ENCODE measurements at regions of chr1 and their contacts with region 1.

Region 1: GRCh38 chr1:109041621-109042468 is at the start of gene WDR47:
- DNase-seq: peak; percentile 94 to 95
- ATAC-seq: peak; percentile 97 to 99 (median 98)
- H3K4me3 ChIP-seq: peak within 1 kb of the TSS; percentile 89 to 100 (median 96)
- H3K27ac ChIP-seq: peak within 1 kb of the TSS; percentile 54 to 93 (median 89)
- H3K4me1 ChIP-seq: peaks cover 0 to 20% (median 13%) of the 10 kb centered on the region in 9 donors
- H3K27me3 ChIP-seq: no peaks in the 10 kb centered on the region
- CTCF ChIP-seq: no peak
- total RNA-seq, gene WDR47: 10.7 to 20.6 (median 14.4) TPM

Region 2: GRCh38 chr1:109075531-109076490 is 34.0 kb after region 1 on chr1 and contains the start of gene TAF13:
- intact Hi-C with region 1: loop called in 1 of 10 experiments (anchors 5 kb)
- DNase-seq: peak; percentile 95
- ATAC-seq: peak; percentile 97 to 100 (median 99)
- H3K4me3 ChIP-seq: peak within 1 kb of the TSS; percentile 55 to 90 (median 76)
- H3K27ac ChIP-seq: peak within 1 kb of the TSS; percentile 58 to 98 (median 94)
- H3K4me1 ChIP-seq: peaks cover 7 to 31% (median 24%) of the 10 kb centered on the region in 9 donors
- H3K27me3 ChIP-seq: no peaks in the 10 kb centered on the region
- CTCF ChIP-seq: peak in 6 of 9 donors; percentile 12 to 46 (median 32)
- total RNA-seq, gene TAF13: 45.8 to 69.9 (median 59.0) TPM

Measured in heart right ventricle (tissue), 16 donors.